HepG2 (cell line): ENCODE measurements at regions of chr3 and their contacts with region 1.

Region 1: GRCh38 chr3:152328841-152329240 is 60.1 kb downstream of the MBNL1 start:
- DNase-seq: peak; percentile 78
- ATAC-seq: peak; percentile 73
- H3K4me3 ChIP-seq: peak overlapping the region in 1 of 3 experiments; percentile 6; a peak in 1 of 6 replicates
- H3K27ac ChIP-seq: peak overlapping the region; percentile 58
- H3K4me1 ChIP-seq: peaks cover 31% of the 10 kb centered on the region
- H3K27me3 ChIP-seq: no peaks in the 10 kb centered on the region
- CTCF ChIP-seq: no peak
- EP300 ChIP-seq: peak in 1 of 2 experiments; percentile 76; a peak in 1 of 4 replicates
- POLR2A ChIP-seq: no peak
- RAD21 ChIP-seq: no peak

Region 2: GRCh38 chr3:152245498-152246170 is 83.2 kb before region 1 on chr3:
- CTCF ChIA-PET with region 1: no interaction called
- POLR2A ChIA-PET with region 1: no interaction called
- in situ Hi-C with region 1: no loop called
- intact Hi-C with region 1: loop called (anchors 5 kb)
- DNase-seq: no peak
- ATAC-seq: no peak
- H3K4me3 ChIP-seq: no peak overlapping the region
- H3K27ac ChIP-seq: no peak overlapping the region
- H3K4me1 ChIP-seq: peaks cover 22% of the 10 kb centered on the region
- H3K27me3 ChIP-seq: no peaks in the 10 kb centered on the region
- CTCF ChIP-seq: no peak
- EP300 ChIP-seq: no peak
- POLR2A ChIP-seq: no peak
- RAD21 ChIP-seq: no peak

Region 3: GRCh38 chr3:152382312-152383135 is 53.7 kb after region 1 on chr3:
- CTCF ChIA-PET with region 1: no interaction called
- POLR2A ChIA-PET with region 1: no interaction called
- in situ Hi-C with region 1: no loop called
- intact Hi-C with region 1: loop called (anchors 5 kb)
- DNase-seq: no peak
- ATAC-seq: no peak
- H3K4me3 ChIP-seq: no peak overlapping the region; a peak in 1 of 6 replicates
- H3K27ac ChIP-seq: peak overlapping the region; percentile 43
- H3K4me1 ChIP-seq: peaks cover 69% of the 10 kb centered on the region
- H3K27me3 ChIP-seq: no peaks in the 10 kb centered on the region
- CTCF ChIP-seq: no peak
- EP300 ChIP-seq: no peak
- POLR2A ChIP-seq: no peak
- RAD21 ChIP-seq: no peak